Uterus (tissue), 4 donors: ENCODE measurements at regions of chr17 and their contacts with region 1.

Region 1: DNA sequence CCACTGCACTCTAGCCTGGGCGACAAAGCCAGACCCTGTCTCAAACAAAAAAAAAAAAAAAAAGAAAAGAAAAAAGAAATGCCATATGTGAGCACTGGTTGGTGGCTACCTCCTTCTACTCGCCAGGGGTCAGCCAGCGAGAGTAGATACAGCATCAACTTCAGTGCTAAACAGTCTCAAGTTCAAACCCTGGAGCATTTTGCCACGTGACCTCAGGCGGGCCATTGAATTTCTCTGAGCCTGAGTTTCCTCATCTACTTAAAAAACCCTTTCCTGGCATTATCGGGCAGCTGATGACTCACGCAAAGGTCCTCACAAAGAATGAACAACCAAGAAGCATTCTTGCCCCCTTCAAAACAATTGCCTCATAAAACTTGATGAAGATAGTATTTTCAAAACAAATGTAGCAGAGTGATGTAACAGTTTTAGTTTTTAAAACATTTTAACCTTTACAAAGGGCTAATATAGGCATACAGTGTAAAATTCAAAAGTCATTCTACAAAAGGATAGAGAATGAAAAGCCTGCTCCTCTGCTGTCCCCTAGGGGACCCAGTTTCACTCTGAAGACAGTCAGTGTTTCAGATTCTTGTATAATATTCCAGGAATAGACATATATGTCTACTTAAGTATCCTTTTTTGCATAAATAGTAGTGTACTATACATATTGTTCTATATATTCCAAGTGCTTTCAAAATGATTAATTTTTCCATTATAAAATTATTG is 28.4 kb downstream of the DNAH2 start:
- DNase-seq: peak in 1 of 2 donors; percentile 50
- H3K4me3 ChIP-seq: no peak overlapping the region
- H3K27ac ChIP-seq: no peak overlapping the region
- H3K4me1 ChIP-seq: peaks cover 0 to 7% of the 10 kb centered on the region in 2 donors
- H3K27me3 ChIP-seq: no peaks in the 10 kb centered on the region
- CTCF ChIP-seq: no peak
- POLR2A ChIP-seq: no peak

Region 2: DNA sequence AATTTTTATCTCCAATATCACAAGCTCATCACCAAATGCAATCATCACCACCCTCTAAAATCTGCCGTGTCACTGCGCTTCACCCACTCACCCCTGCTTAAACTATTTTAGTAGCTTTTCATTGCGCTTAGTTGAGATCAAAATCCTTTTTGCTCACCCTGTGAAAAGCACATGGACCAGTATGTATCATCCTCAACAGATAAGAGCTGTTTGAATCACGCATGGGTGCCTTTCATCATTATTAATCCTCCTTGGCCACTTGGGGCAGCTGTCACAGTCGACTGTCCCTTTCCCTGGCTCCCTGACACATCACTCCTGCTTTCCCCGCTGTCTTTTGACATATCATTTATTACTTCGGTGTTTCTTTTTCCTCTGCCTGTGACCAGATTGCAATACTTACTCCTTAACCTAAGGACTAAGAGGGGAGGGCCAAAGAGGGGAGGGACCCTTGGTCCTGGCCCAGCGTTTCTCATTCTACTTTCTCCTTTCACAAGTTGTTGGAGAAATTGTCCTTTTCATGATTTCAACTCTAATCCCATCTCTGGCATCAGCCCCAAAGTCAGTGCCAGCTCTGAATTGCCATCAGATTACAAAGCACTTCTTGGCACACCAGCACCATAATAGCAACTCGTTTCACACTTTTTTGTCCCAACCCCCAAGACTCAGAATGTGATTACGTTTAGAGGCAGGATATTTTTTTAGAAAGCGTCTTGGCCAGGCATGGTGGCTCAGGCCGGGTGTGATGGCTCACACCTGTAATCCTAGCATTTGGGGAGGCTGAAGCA is 79.5 kb after region 1 on chr17:
- intact Hi-C with region 1: loop called (anchors 10 kb)
- DNase-seq: no peak
- H3K4me3 ChIP-seq: no peak overlapping the region
- H3K27ac ChIP-seq: no peak overlapping the region
- H3K4me1 ChIP-seq: no peaks in the 10 kb centered on the region
- H3K27me3 ChIP-seq: no peaks in the 10 kb centered on the region
- CTCF ChIP-seq: no peak
- POLR2A ChIP-seq: no peak